ENCODE measurements at regions of chr12 and their contacts with region 1.

Region 1: GRCh38 chr12:10562306-10562933 is 51.0 kb downstream of the MAGOHB start:
- DNase-seq: peak; percentile 69
- ATAC-seq: no peak
- H3K4me3 ChIP-seq: no peak overlapping the region
- H3K4me3 Mint-ChIP-seq: no peak overlapping the region
- H3K27ac ChIP-seq: no peak overlapping the region
- H3K27ac Mint-ChIP-seq: no peak overlapping the region
- H3K4me1 ChIP-seq: no peaks in the 10 kb centered on the region
- H3K4me1 Mint-ChIP-seq: no peaks in the 10 kb centered on the region
- H3K27me3 ChIP-seq: no peaks in the 10 kb centered on the region
- H3K27me3 Mint-ChIP-seq: peaks cover 22% of the 10 kb centered on the region
- CTCF ChIP-seq: peak; percentile 89

Region 2: DNA sequence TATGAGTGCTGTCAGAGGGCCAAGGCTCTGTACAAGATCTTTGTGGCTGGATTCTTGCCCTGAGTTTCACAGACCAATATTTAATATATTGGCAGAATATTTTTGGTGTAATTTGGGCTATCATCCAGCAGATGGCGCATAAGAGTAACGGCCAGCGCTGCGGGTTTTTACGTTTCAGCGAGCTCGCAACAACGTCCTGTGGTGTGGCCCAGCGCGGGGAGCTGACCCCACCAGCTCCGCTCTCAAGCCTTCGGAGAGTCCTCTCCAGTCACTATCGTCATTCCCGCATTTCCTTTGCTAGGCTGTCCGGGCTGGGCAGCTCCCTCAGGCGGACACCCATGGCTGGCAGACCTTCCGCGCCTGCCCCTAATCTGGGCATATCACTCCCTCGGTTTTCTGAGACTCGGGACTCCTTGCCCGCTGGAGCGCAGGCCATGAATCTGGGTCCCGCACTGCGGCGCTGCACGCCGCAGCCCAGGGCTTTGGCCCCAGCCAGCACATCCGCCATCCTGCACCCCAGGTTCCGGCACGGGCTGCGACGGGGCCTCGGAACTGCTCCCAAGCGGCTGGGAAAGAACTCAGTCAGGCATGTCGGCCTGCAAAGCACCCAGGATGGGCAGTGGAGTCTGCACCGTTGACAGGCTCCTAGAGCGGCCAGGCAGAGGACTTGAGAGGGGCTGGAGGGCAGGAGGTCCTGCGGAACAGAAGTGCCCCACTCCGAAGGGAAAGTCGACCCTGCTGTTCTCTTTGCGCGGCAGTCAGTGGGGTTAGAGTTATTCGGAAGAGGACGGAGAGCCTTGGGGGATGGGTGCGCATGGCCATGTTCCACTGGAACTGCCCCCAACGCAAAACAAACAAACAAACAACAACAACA is 408.9 kb before region 1 on chr12:
- CTCF ChIA-PET with region 1: interaction called, 13 read pairs
- POLR2A ChIA-PET with region 1: no interaction called
- intact Hi-C with region 1: loop called (anchors 2 kb)
- DNase-seq: peak; percentile 77
- ATAC-seq: peak; percentile 75
- H3K4me3 ChIP-seq: peak overlapping the region; percentile 32 to 79 (median 68)
- H3K4me3 Mint-ChIP-seq: peak overlapping the region; percentile 92
- H3K27ac ChIP-seq: no peak overlapping the region
- H3K27ac Mint-ChIP-seq: no peak overlapping the region
- H3K4me1 ChIP-seq: peaks cover 12 to 14% of the 10 kb centered on the region in 2 donors
- H3K4me1 Mint-ChIP-seq: peaks cover 17% of the 10 kb centered on the region
- H3K27me3 ChIP-seq: peaks cover 0 to 16% (median 12%) of the 10 kb centered on the region in 4 experiments
- H3K27me3 Mint-ChIP-seq: peaks cover 31% of the 10 kb centered on the region
- CTCF ChIP-seq: peak; percentile 95

Region 3: DNA sequence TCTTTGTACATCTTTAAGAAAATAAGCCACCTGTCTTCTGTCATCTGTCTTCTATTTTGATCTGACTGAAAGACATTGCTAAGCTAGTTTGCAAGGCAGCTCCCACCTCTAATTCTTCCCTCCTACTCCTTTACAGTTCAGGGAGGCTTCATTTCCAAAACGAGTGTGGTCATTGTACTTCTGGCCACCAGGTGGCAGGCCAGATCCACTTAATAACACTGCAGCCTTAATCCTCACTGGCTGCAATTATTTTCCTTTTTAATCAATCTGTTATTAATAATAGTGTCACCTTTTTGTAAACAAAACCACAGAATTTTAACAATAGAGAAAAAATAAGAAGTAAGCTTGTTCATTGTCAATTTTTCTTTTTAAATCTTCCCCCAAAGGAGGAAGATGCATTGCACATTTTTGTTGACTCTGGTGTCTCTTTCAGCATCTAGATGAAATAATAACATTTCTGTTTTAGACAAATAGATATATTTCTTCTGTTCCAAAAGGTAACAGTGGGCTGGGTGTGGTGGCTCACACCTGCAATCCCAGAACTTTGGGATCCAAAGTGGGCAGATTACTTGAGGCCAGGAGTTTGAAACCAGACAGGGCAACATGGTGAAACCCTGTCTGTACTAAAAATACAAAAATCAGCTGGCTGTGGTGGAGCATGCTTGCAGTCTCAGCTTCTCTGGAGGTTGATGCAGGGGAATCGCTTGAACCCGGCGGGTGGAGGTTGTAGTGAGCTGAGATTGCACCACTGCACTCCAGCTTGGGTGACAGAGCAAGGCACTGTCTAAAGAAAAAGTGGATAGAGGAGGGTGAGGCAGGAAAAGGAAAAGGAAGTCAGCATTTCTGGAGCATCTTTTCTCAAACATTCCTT is 326.4 kb before region 1 on chr12:
- CTCF ChIA-PET with region 1: interaction called, 99 read pairs
- POLR2A ChIA-PET with region 1: no interaction called
- intact Hi-C with region 1: loop called (anchors 1 kb)
- DNase-seq: peak; percentile 67
- ATAC-seq: peak; percentile 62
- H3K4me3 ChIP-seq: no peak overlapping the region
- H3K4me3 Mint-ChIP-seq: no peak overlapping the region
- H3K27ac ChIP-seq: no peak overlapping the region
- H3K27ac Mint-ChIP-seq: no peak overlapping the region
- H3K4me1 ChIP-seq: no peaks in the 10 kb centered on the region
- H3K4me1 Mint-ChIP-seq: no peaks in the 10 kb centered on the region
- H3K27me3 ChIP-seq: peaks cover 0 to 7% (median 2%) of the 10 kb centered on the region in 4 experiments
- H3K27me3 Mint-ChIP-seq: peaks cover 8% of the 10 kb centered on the region
- CTCF ChIP-seq: peak; percentile 94

Region 4: DNA sequence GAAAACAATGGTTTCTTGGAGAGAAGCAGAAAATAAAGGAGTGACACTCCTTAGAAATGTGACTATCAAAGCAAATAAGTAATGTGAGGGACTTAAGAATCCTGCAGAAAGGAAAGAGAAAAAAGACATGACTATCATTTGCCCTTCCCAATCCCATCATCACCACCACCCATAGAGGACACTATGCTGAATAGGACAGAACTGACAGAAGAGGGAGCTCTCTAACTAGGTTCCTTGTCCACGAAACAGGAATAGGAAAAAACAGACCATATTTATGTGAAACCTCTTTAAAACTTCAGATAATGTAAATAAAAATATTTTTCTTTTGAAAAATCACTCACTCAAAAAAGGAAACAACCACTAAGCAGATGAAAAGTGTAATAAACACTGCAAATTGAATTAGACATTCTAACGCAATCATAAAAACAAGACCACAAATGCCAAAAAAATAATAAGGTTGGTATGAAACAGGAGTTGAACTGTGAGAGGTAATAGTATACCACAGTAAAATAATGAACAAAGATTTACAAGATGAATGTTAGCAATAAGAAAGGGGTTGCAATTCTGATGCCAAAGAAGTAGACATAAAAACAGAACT is 230.7 kb before region 1 on chr12:
- CTCF ChIA-PET with region 1: interaction called, 81 read pairs
- POLR2A ChIA-PET with region 1: no interaction called
- intact Hi-C with region 1: loop called (anchors 1 kb)
- DNase-seq: peak; percentile 66
- ATAC-seq: peak; percentile 33
- H3K4me3 ChIP-seq: no peak overlapping the region
- H3K4me3 Mint-ChIP-seq: no peak overlapping the region
- H3K27ac ChIP-seq: no peak overlapping the region
- H3K27ac Mint-ChIP-seq: no peak overlapping the region
- H3K4me1 ChIP-seq: no peaks in the 10 kb centered on the region
- H3K4me1 Mint-ChIP-seq: no peaks in the 10 kb centered on the region
- H3K27me3 ChIP-seq: no peaks in the 10 kb centered on the region
- H3K27me3 Mint-ChIP-seq: no peaks in the 10 kb centered on the region
- CTCF ChIP-seq: peak; percentile 68

Region 5: GRCh38 chr12:10364815-10365622 is 197.4 kb before region 1 on chr12:
- CTCF ChIA-PET with region 1: interaction called, 11 read pairs
- POLR2A ChIA-PET with region 1: no interaction called
- intact Hi-C with region 1: no loop called
- DNase-seq: peak; percentile 87
- ATAC-seq: peak; percentile 73
- H3K4me3 ChIP-seq: peak overlapping the region; percentile 72 to 98 (median 95)
- H3K4me3 Mint-ChIP-seq: no peak overlapping the region
- H3K27ac ChIP-seq: peak overlapping the region; percentile 91 to 93
- H3K27ac Mint-ChIP-seq: no peak overlapping the region
- H3K4me1 ChIP-seq: peaks cover 32 to 46% of the 10 kb centered on the region in 2 donors
- H3K4me1 Mint-ChIP-seq: peaks cover 2% of the 10 kb centered on the region
- H3K27me3 ChIP-seq: no peaks in the 10 kb centered on the region
- H3K27me3 Mint-ChIP-seq: no peaks in the 10 kb centered on the region
- CTCF ChIP-seq: no peak